Sciatic nerve (tissue), 2 donors: ENCODE measurements at regions of chr15 and their contacts with region 1.

Region 1: DNA sequence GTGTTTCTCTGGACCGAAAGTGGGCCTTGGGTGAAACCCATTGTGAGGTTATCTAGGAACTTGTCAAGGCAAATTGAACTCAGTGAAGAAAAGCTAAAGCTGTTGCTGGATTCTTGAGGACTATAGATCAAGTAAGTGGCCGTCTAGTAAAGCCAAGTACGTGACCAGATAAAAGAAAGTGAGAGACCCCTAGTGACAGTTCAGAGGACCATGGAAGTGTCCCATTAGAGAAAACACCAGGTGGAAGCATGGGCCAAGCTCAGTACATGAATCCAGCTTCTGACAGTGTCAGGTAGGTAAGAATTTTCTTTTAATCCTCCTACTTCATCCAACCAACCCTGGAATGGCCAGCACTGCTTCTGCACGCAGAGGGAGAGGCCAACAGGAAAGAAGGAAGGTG is 349.3 kb upstream of the RGMA start:
- DNase-seq: no peak
- ATAC-seq: no peak

Region 2: GRCh38 chr15:91435113-91435512 is 2003.2 kb before region 1 on chr15:
- intact Hi-C with region 1: no loop called
- DNase-seq: no peak
- ATAC-seq: no peak

Region 3: DNA sequence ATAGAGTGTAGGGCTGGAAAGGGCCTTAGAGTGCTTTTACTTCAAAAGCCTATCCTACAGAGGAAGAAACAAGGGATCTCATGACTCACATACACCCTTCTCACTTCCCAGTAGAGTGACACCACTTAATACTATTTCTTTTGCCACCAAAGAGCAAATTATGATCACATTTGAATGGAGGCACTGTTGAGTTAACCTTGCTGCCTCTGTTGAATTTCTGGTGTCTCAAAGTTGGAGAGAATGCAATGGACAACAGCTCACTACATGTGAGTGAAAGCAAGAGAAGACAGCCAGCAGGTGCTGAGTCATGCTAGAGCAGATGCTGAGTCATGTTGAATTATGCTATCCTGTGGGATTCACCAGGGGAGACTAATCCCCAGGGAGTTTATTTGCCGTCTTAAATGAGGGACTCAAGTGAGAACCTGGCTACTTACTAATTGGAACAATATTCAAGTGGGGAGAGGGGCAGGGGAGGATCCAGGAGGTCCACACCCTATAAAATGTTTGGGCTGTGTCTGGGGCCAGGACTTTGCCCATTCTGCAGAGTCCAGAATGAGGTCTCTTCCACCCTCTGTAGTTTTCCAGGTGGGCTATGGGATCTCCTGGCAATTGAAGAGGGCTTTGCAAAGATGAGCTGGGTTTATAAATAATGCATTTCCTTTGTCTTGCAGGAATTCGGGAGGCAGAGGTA is 1008.8 kb before region 1 on chr15:
- intact Hi-C with region 1: loop called (anchors 5 kb)
- DNase-seq: no peak
- ATAC-seq: no peak

Region 4: DNA sequence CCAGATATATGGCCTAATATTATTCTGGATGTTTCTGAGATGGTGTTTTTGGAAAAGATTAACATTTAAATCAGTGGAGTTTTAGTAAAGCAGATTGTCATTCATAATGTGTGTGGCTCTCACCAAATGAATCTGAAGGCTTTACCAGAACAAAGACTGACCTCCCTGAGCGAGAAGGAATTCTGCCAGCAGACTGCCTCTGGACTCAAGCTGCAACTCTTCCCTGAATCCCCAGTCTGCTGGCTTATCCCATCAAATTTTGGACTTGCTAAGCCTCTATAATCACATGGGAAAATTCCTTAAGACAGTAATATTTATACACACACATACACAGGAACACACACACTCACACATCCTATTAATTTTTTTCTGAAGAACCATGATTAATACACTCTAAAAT is 885.0 kb before region 1 on chr15:
- intact Hi-C with region 1: no loop called
- DNase-seq: no peak
- ATAC-seq: no peak

Region 5: GRCh38 chr15:93553167-93553935 is 115.0 kb after region 1 on chr15:
- intact Hi-C with region 1: no loop called
- DNase-seq: no peak
- ATAC-seq: no peak